PC-3 (cell line): ENCODE measurements at regions of chr22 and their contacts with region 1.

Region 1: GRCh38 chr22:34592123-34592740 is 473.7 kb upstream of the ISX start:
- DNase-seq: no peak
- ATAC-seq: no peak
- H3K4me3 ChIP-seq: no peak overlapping the region
- H3K27ac ChIP-seq: no peak overlapping the region
- H3K4me1 ChIP-seq: no peaks in the 10 kb centered on the region
- H3K27me3 ChIP-seq: no peaks in the 10 kb centered on the region
- CTCF ChIP-seq: no peak

Region 2: DNA sequence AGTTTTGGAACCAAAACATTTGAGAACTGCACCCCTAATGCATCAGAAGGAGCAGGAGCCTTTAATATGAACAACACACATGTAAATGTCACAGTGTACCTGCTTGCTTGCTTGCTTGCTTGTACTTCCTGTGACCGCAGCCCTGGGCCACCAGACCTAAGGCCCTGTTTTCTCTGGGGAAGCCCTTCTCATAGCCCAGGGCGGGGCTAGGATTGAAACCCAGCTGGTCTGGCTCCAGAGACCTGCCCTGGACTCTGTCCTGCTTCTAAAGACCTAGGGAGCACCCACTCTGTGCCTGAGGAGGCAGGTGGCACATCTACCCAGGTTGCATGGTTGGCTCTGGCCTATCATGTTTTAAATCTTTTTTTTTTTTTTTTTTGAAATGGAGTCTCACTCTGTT is 800.1 kb after region 1 on chr22:
- CTCF ChIA-PET with region 1: no interaction called
- POLR2A ChIA-PET with region 1: interaction called, 13 read pairs
- intact Hi-C with region 1: no loop called
- DNase-seq: no peak
- ATAC-seq: no peak
- H3K4me3 ChIP-seq: no peak overlapping the region
- H3K27ac ChIP-seq: no peak overlapping the region
- H3K4me1 ChIP-seq: no peaks in the 10 kb centered on the region
- H3K27me3 ChIP-seq: no peaks in the 10 kb centered on the region
- CTCF ChIP-seq: no peak